HCT116 (cell line): ENCODE measurements at regions of chr4 and their contacts with region 1.

Region 1: GRCh38 chr4:115090483-115091075 is 22.8 kb downstream of the NDST4 start:
- DNase-seq: peak; percentile 32
- ATAC-seq: peak; percentile 50
- H3K4me3 ChIP-seq: no peak overlapping the region
- H3K27ac ChIP-seq: no peak overlapping the region
- H3K4me1 ChIP-seq: no peaks in the 10 kb centered on the region
- H3K27me3 ChIP-seq: no peaks in the 10 kb centered on the region
- CTCF ChIP-seq: peak; percentile 46 to 68 (median 51); a peak in 5 of 6 replicates
- POLR2A ChIP-seq: no peak
- RAD21 ChIP-seq: peak; percentile 74

Region 2: GRCh38 chr4:113711883-113712662 is 1378.5 kb before region 1 on chr4:
- CTCF ChIA-PET with region 1: no interaction called
- POLR2A ChIA-PET with region 1: no interaction called
- RAD21 ChIA-PET with region 1: no interaction called
- intact Hi-C with region 1: no loop called
- DNase-seq: no peak
- ATAC-seq: no peak
- H3K4me3 ChIP-seq: no peak overlapping the region
- H3K27ac ChIP-seq: no peak overlapping the region
- H3K4me1 ChIP-seq: peaks cover 8 to 15% of the 10 kb centered on the region in 2 experiments; a peak in 3 of 4 replicates
- H3K27me3 ChIP-seq: no peaks in the 10 kb centered on the region
- CTCF ChIP-seq: no peak
- POLR2A ChIP-seq: no peak
- RAD21 ChIP-seq: no peak

Region 3: DNA sequence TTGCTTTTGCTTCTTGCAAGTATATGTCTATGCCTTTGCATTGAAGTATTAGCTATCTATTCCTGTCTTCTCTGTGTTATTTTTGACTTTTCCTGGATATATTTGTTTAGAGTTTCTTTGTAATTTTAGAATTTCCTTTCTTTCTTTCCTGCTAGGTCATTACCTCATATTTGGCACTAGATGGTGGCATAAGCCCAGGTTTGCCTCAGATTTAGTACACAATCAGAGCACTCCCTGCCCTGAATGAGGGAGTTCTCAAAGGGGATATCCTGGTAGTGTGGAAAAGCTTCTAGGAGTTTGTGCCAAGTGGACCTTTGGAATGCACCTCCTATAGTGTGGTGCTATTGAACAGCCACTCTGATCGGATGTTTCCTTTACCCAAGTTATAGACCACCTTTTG is 310.4 kb before region 1 on chr4:
- CTCF ChIA-PET with region 1: no interaction called
- POLR2A ChIA-PET with region 1: no interaction called
- RAD21 ChIA-PET with region 1: no interaction called
- intact Hi-C with region 1: loop called (anchors 10 kb)
- DNase-seq: peak; percentile 24
- ATAC-seq: peak; percentile 87
- H3K4me3 ChIP-seq: no peak overlapping the region
- H3K27ac ChIP-seq: no peak overlapping the region
- H3K4me1 ChIP-seq: no peaks in the 10 kb centered on the region
- H3K27me3 ChIP-seq: no peaks in the 10 kb centered on the region
- CTCF ChIP-seq: peak; percentile 39 to 75 (median 44); a peak in 4 of 6 replicates
- POLR2A ChIP-seq: no peak
- RAD21 ChIP-seq: peak; percentile 82

Region 4: GRCh38 chr4:115101674-115102073 is 11.1 kb after region 1 on chr4:
- CTCF ChIA-PET with region 1: no interaction called
- POLR2A ChIA-PET with region 1: no interaction called
- RAD21 ChIA-PET with region 1: no interaction called
- intact Hi-C with region 1: no loop called
- DNase-seq: no peak
- ATAC-seq: no peak
- H3K4me3 ChIP-seq: no peak overlapping the region
- H3K27ac ChIP-seq: no peak overlapping the region
- H3K4me1 ChIP-seq: no peaks in the 10 kb centered on the region
- H3K27me3 ChIP-seq: no peaks in the 10 kb centered on the region
- CTCF ChIP-seq: no peak
- POLR2A ChIP-seq: no peak
- RAD21 ChIP-seq: no peak

Region 5: GRCh38 chr4:115537387-115537786 is 446.8 kb after region 1 on chr4:
- CTCF ChIA-PET with region 1: interaction called, 5 read pairs
- POLR2A ChIA-PET with region 1: no interaction called
- RAD21 ChIA-PET with region 1: no interaction called
- intact Hi-C with region 1: loop called (anchors 2 kb)
- DNase-seq: peak; percentile 12
- ATAC-seq: no peak
- H3K4me3 ChIP-seq: no peak overlapping the region
- H3K27ac ChIP-seq: no peak overlapping the region
- H3K4me1 ChIP-seq: no peaks in the 10 kb centered on the region
- H3K27me3 ChIP-seq: no peaks in the 10 kb centered on the region
- CTCF ChIP-seq: peak in 1 of 3 experiments; percentile 39; a peak in 2 of 6 replicates
- POLR2A ChIP-seq: no peak
- RAD21 ChIP-seq: peak; percentile 60

Region 6: GRCh38 chr4:115851918-115852766 is 761.6 kb after region 1 on chr4:
- CTCF ChIA-PET with region 1: no interaction called
- POLR2A ChIA-PET with region 1: no interaction called
- RAD21 ChIA-PET with region 1: no interaction called
- intact Hi-C with region 1: loop called (anchors 1 kb)
- DNase-seq: peak; percentile 51
- ATAC-seq: peak; percentile 87
- H3K4me3 ChIP-seq: no peak overlapping the region
- H3K27ac ChIP-seq: no peak overlapping the region
- H3K4me1 ChIP-seq: no peaks in the 10 kb centered on the region
- H3K27me3 ChIP-seq: no peaks in the 10 kb centered on the region
- CTCF ChIP-seq: peak; percentile 25 to 76 (median 68); a peak in 5 of 6 replicates
- POLR2A ChIP-seq: no peak
- RAD21 ChIP-seq: peak; percentile 67